ENCODE measurements at regions of chr2 and their contacts with region 1.

Region 1: GRCh38 chr2:194867328-194867727 is 789.7 kb upstream of the SLC39A10 start:
- DNase-seq: no peak
- H3K4me3 Mint-ChIP-seq: no peak overlapping the region
- H3K27ac Mint-ChIP-seq: no peak overlapping the region
- H3K4me1 Mint-ChIP-seq: no peaks in the 10 kb centered on the region
- H3K27me3 Mint-ChIP-seq: no peaks in the 10 kb centered on the region

Region 2: GRCh38 chr2:194166818-194167217 is 700.5 kb before region 1 on chr2:
- CTCF ChIA-PET with region 1: no interaction called
- intact Hi-C with region 1: loop called (anchors 2 kb)
- DNase-seq: peak; percentile 33
- H3K4me3 Mint-ChIP-seq: no peak overlapping the region
- H3K27ac Mint-ChIP-seq: no peak overlapping the region
- H3K4me1 Mint-ChIP-seq: no peaks in the 10 kb centered on the region
- H3K27me3 Mint-ChIP-seq: peaks cover 5% of the 10 kb centered on the region

Region 3: GRCh38 chr2:194545978-194546377 is 321.4 kb before region 1 on chr2:
- CTCF ChIA-PET with region 1: no interaction called
- intact Hi-C with region 1: loop called (anchors 10 kb)
- DNase-seq: no peak
- H3K4me3 Mint-ChIP-seq: no peak overlapping the region
- H3K27ac Mint-ChIP-seq: no peak overlapping the region
- H3K4me1 Mint-ChIP-seq: no peaks in the 10 kb centered on the region
- H3K27me3 Mint-ChIP-seq: peaks cover 7% of the 10 kb centered on the region

Region 4: DNA sequence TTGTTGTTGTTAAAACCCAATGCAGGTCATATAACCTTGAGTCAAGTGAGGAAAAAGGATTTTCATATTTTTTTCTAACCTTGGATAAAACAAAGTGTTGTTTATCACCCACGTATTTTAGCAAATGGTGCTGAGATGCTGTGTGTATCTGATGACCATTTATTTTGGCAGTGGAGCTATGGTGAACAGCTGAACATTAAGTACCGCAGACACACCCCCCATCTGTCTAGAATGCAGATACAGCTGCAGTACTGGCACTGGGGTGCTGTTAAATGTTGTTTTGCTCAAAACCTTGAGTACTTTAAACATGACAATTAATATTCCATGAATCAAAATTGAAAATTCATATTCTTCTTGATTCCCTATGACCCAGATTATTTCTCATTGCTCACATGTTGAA is 16.4 kb after region 1 on chr2:
- CTCF ChIA-PET with region 1: no interaction called
- intact Hi-C with region 1: loop called (anchors 1 kb)
- DNase-seq: no peak
- H3K4me3 Mint-ChIP-seq: no peak overlapping the region
- H3K27ac Mint-ChIP-seq: no peak overlapping the region
- H3K4me1 Mint-ChIP-seq: no peaks in the 10 kb centered on the region
- H3K27me3 Mint-ChIP-seq: peaks cover under 1% of the 10 kb centered on the region

Measured in activated naive CD4-positive, alpha-beta T cell treated with anti-CD3 and anti-CD28 coated beads for 36 hours (primary cell).